ENCODE measurements at regions of chr20 and their contacts with region 1.

Region 1: DNA sequence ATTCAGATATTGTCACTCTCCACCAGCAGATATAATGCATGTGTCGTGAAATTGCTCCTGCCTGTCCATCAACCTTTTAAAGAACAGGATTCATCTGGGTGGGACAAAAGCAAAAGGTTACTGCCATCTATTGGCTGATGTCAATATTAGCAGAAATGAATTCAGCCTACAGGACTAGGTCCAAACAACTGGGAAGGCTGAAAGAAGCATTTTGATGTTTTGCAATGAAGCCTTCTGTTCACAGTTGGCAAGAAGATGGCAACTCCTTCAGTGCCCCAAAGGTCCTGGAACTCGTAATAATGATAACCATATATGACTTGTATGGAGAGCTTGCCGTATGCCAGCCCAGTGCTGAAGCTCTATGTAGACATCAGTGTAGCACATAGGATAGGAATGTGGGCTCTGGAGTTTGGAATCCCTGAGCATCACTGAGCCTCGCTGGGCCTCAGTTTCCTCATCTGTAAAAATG is 7.5 kb downstream of the BCAS1 start:
- DNase-seq: peak in 1 of 2 experiments; percentile 60
- H3K4me3 ChIP-seq: no peak overlapping the region
- H3K27ac ChIP-seq: no peak overlapping the region
- H3K4me1 ChIP-seq: peaks cover 13% of the 10 kb centered on the region
- H3K27me3 ChIP-seq: no peaks in the 10 kb centered on the region
- CTCF ChIP-seq: peak; percentile 79

Region 2: DNA sequence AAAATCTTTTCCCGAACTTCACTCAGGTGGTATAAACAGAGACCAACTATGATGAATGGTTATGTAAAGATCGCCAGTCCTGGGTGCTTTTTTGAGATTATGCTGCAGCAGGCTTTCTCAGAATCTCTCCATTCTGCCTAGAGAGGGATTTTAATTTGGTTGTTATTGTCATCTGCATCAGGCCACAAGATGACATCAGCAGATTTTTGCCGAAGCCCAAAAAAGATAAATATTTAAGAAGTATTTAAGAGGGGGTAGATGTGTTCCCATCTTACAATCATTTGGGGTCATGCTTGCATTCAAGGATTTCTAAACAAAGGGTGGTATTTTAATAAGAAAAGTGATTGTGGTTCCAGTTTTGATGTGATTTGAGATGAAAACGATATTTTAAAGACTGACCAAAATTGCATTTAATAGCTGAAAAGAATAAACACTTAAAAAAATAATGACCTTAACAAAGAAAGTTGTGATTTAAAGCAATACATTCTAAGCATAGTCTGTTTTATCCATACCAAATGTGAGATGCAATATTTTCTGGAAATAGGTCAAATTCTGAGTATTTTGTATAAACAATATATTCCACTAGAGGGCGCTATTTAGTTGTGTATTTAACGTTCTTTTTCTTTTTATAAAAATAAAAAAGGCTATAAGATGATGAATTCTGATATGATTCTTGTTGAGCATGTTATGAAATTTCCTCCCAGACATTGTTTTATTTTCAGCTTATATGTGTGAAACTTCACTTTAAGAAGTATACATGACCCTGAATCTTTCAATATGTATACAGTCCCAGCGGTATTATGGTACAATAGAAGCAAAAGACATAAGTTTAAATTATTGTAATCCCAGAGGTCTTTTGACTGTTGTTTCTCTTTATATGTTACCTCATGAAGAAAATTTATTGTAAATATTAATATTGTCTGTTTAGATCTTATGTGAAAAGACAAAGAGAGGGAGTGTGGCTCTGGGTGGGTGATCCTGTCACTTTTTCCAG is 1820.3 kb before region 1 on chr20:
- CTCF ChIA-PET with region 1: no interaction called
- POLR2A ChIA-PET with region 1: no interaction called
- intact Hi-C with region 1: loop called (anchors 5 kb)
- DNase-seq: no peak
- H3K4me3 ChIP-seq: no peak overlapping the region
- H3K27ac ChIP-seq: no peak overlapping the region
- H3K4me1 ChIP-seq: no peaks in the 10 kb centered on the region
- H3K27me3 ChIP-seq: peaks cover 36% of the 10 kb centered on the region; the same call in 1 of the 2 replicates
- CTCF ChIP-seq: peak; percentile 94

Region 3: DNA sequence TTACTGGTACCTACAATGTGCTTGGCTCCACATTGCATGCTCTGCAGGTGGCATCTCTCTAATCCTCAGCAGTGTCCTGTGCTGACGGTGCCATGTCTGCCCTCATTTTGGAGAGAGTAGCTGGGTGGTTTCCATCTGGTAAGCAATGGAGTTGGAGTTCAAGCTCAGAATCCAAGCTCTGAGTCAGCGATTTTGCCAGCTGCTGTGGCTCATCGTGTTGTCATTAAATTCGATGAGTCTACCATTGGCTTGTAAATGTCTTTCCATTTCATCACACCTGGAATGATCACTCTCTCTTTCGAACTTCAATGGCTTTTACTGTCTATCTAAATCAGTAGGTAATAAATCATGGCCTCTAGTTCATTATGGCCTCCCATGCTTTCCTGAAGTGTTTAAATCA is 1469.2 kb before region 1 on chr20:
- CTCF ChIA-PET with region 1: no interaction called
- POLR2A ChIA-PET with region 1: no interaction called
- intact Hi-C with region 1: no loop called
- DNase-seq: no peak
- H3K4me3 ChIP-seq: no peak overlapping the region
- H3K27ac ChIP-seq: no peak overlapping the region
- H3K4me1 ChIP-seq: no peaks in the 10 kb centered on the region
- H3K27me3 ChIP-seq: peaks cover 3% of the 10 kb centered on the region; the same call in 1 of the 2 replicates
- CTCF ChIP-seq: no peak

Region 4: GRCh38 chr20:53578492-53579222 is 484.2 kb before region 1 on chr20:
- CTCF ChIA-PET with region 1: no interaction called
- POLR2A ChIA-PET with region 1: no interaction called
- intact Hi-C with region 1: loop called (anchors 5 kb)
- DNase-seq: peak; percentile 61 to 77
- H3K4me3 ChIP-seq: peak overlapping the region; percentile 49
- H3K27ac ChIP-seq: peak overlapping the region; percentile 91
- H3K4me1 ChIP-seq: peaks cover 64% of the 10 kb centered on the region
- H3K27me3 ChIP-seq: no peaks in the 10 kb centered on the region
- CTCF ChIP-seq: peak; percentile 96

Region 5: DNA sequence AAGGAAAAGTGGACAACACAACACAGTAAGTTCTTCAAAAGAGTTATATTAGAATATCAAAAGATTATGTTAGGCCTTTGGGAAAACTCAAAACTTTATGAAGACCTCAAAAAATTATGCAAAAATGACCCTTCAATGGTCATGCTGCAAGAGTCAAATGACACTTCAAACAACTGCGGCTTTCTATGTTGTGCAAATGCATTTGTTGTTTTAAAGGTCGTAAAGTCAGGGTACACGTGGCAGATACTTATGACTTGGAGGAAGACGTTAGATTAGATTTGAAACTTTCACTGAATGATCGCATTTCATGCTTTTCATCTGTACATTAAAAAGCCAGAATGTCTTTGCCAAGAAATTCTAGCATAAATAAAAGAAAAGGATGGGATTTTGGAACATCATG is 23.9 kb before region 1 on chr20:
- CTCF ChIA-PET with region 1: interaction called, 14 read pairs
- POLR2A ChIA-PET with region 1: no interaction called
- intact Hi-C with region 1: no loop called
- DNase-seq: no peak
- H3K4me3 ChIP-seq: no peak overlapping the region
- H3K27ac ChIP-seq: no peak overlapping the region
- H3K4me1 ChIP-seq: no peaks in the 10 kb centered on the region
- H3K27me3 ChIP-seq: no peaks in the 10 kb centered on the region
- CTCF ChIP-seq: no peak

Region 6: DNA sequence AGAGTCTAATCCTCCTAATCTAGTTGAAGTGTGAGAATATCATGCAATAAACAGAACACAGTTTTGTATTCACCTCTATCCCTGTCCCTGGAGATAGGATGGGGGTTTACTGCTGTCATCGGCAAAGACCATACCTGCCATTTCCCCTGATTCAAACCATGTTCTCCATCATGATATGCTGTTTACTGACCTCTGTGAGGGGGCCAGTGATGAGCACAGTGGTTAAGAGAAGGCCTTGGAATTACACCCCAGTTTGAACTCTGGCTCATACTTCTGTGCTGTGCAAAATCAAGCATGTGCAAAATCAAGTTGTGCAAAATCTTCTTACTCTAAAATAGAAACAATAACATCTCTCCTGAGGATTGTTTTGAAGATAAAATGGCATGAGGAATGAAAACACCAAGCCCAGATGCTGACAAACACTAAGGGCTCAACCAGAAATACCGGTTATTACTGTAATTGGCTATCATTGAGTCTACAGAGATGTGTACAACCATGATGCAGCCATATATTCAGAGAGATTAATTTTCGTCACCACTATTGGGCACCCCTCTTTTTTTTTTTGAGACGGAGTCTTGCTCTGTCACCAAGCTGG is 13.3 kb after region 1 on chr20:
- CTCF ChIA-PET with region 1: no interaction called
- POLR2A ChIA-PET with region 1: no interaction called
- intact Hi-C with region 1: no loop called
- DNase-seq: peak in 1 of 2 experiments; percentile 74
- H3K4me3 ChIP-seq: no peak overlapping the region
- H3K27ac ChIP-seq: no peak overlapping the region
- H3K4me1 ChIP-seq: peaks cover 18% of the 10 kb centered on the region
- H3K27me3 ChIP-seq: no peaks in the 10 kb centered on the region
- CTCF ChIP-seq: no peak

Region 7: DNA sequence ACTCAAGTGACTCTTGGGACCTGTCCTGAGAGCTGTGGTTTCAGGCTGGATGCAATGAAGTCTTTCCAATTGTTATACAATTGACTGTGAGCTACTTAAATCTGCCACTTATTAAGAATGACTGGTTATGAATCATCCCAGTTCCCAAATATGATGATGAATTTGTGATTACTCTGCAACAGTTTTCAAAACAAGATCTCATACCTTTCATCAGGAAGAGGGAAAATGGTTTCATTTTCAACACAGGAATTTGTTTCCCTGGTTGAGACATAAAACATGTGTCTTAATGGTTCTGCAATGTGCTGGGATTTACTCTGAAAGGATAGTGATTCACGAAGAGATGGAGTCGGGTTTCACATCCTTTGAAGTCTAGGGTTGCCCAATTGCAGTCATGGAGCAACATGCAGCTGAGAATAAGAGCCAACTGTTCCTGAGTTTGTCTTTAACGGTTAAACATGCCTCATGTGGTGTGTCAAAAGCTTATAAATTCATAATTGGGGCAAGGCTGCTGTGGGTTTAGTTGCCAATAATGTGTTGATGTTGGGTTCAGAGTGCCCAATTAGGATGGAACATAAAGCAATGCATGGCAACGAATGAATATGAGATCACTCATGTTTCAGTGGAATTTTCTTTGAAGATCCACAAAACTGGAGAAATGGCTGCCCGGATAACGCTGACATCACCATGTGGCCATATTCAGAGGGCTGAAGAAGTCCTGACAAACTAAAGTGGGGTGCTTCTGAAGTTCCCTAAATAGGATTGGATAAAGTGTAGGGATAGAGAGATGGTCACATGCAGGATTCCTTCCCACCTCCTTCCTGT is 70.0 kb after region 1 on chr20:
- CTCF ChIA-PET with region 1: interaction called, 3 read pairs
- POLR2A ChIA-PET with region 1: no interaction called
- intact Hi-C with region 1: loop called (anchors 1 kb)
- DNase-seq: peak; percentile 62 to 100
- H3K4me3 ChIP-seq: peak overlapping the region; percentile 6; the same call in 1 of the 2 replicates
- H3K27ac ChIP-seq: peak overlapping the region; percentile 99
- H3K4me1 ChIP-seq: peaks cover 48% of the 10 kb centered on the region
- H3K27me3 ChIP-seq: no peaks in the 10 kb centered on the region
- CTCF ChIP-seq: no peak

Region 8: DNA sequence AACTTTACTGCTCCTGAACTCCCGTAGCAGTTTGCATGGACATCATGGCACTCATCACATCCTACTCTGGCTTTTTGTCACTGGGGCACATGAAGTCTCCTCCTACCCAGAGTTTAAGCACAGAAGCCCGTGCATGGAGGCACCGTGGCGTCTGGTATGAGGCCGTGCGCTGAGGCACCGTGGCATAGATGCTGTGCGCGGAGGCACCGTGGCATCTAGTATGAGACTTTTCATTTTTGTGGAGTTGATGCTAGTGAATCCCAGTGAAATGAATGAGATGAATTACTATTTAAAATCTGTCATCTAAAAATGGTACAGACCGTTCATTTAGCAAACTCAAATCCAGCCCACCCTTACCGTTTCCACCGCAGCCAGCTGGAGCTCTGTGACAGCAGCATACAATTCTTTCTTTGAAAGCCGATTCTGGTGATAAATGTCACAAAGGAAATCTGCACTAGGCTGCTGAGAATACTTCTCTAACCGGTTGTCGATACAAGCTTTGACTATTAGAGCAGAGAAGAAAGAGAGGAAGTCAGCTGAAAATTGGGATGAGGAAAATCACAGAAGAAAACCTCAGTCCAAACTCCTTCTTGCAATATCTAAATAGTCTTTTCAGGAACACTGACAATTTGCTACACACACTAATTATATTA is 99.6 kb after region 1 on chr20:
- CTCF ChIA-PET with region 1: no interaction called
- POLR2A ChIA-PET with region 1: no interaction called
- intact Hi-C with region 1: no loop called
- DNase-seq: peak in 1 of 2 experiments; percentile 31
- H3K4me3 ChIP-seq: no peak overlapping the region
- H3K27ac ChIP-seq: no peak overlapping the region
- H3K4me1 ChIP-seq: peaks cover 19% of the 10 kb centered on the region
- H3K27me3 ChIP-seq: no peaks in the 10 kb centered on the region
- CTCF ChIP-seq: no peak

Measured in PC-9 (cell line).